ENCODE measurements at regions of chr7 and their contacts with region 1.

Region 1: DNA sequence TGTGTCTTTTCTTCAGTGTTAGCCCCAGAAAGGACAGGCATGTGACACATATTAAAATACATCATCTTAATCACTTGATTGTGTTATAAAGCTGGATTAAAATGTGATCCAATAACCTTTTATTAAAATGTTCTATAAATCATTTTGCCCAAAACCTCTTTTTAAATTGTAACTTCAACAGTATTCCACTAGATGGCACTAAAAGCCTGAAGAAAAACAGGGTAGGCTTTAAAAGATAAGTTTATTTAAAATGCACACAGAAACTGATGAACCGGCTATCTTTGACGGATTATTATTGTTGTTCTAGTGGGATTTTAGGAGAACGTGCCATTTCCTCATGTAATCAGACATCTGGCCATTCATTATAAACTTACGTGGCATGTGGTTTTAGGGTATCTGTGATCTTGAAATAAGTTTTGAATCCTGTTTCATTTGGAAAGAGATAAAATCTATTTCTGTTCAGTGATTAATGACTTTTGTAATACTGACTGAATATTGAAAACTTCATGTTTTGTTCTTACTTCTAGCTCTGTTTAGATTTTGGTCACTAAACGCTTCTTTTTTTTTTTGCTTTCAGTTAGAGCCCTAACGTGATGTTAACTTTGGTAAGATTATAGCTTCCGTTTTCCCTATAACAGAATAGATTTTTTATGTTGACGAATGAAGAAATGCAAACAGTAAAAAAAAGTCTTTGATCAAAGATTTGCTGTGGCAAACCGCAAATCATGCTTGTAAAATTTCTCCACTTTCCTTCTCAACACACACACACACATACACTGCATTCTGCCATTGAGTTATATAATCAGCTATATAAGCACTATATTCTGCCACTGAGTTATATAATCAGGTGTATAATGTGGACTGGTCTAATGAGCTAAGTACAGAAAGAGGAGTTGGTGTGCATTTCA is 13.6 kb downstream of the VPS50 start:
- DNase-seq: peak in 1 of 35 experiments; percentile 50
- ATAC-seq: peak in 1 of 4 experiments; percentile 45
- H3K4me3 ChIP-seq: no peak overlapping the region
- H3K4me3 Mint-ChIP-seq: peak overlapping the region; percentile 8 to 64 (median 40)
- H3K27ac ChIP-seq: no peak overlapping the region
- H3K27ac Mint-ChIP-seq: peak overlapping the region in 1 of 2 donors; percentile 67
- H3K4me1 ChIP-seq: no peaks in the 10 kb centered on the region
- H3K4me1 Mint-ChIP-seq: peaks cover 15 to 20% (median 18%) of the 10 kb centered on the region in 3 donors
- H3K27me3 ChIP-seq: no peaks in the 10 kb centered on the region
- H3K27me3 Mint-ChIP-seq: no peaks in the 10 kb centered on the region

Region 2: DNA sequence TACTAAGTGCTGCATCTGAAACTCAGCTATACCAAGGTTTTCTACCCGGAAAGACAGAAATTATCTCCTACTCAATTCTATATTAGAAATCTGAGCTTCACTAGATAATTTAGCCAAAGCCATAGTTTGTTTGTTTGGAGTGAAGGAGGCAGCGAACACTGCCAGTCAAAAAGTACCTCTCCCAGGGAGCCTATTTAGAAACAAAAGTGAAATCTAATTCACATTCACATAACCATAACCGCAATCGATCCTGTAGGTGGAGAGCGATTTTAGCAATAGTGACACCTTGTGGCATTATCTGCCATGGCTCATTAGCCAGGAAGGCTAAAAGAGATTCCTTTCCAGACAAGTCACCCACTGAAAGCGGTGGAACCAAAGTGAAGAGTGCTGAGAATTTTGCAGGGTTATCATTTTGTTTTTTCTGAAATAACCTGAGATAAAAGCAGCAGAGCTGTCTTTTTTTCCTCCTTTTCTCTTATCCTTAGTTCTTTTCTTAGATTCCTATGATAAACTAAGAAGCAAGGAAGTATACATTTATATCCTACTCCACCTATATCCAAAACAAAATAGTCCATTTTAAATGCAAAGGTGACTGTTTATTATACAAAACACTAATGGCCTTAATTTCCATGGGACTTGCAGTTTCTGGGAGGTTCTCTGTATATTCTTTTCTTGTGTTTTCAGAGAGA is 842.0 kb after region 1 on chr7:
- CTCF ChIA-PET with region 1: interaction called, 10 to 24 read pairs
- POLR2A ChIA-PET with region 1: no interaction called
- DNase-seq: peak in 27 of 35 experiments; percentile 2 to 72 (median 20)
- ATAC-seq: peak; percentile 73 to 97 (median 80)
- H3K4me3 ChIP-seq: peak overlapping the region in 1 of 2 donors; percentile 44
- H3K4me3 Mint-ChIP-seq: peak overlapping the region; percentile 54 to 71 (median 55)
- H3K27ac ChIP-seq: no peak overlapping the region
- H3K27ac Mint-ChIP-seq: peak overlapping the region in 1 of 2 donors; percentile 18
- H3K4me1 ChIP-seq: no peaks in the 10 kb centered on the region
- H3K4me1 Mint-ChIP-seq: peaks cover 4 to 6% (median 4%) of the 10 kb centered on the region in 3 donors
- H3K27me3 ChIP-seq: no peaks in the 10 kb centered on the region
- H3K27me3 Mint-ChIP-seq: peaks cover 16 to 22% of the 10 kb centered on the region in 2 donors

Measured in T-cell (primary cell).